ENCODE measurements at regions of chr17 and their contacts with region 1.

Region 1: GRCh38 chr17:78781948-78782916 is at the start of gene CYTH1:
- DNase-seq: peak; percentile 95 to 99 (median 96)
- H3K4me3 ChIP-seq: peak within 1 kb of the TSS; percentile 63 to 91
- H3K4me3 Mint-ChIP-seq: peak within 1 kb of the TSS; percentile 89 to 96 (median 94)
- H3K27ac ChIP-seq: peak within 1 kb of the TSS; percentile 95
- H3K27ac Mint-ChIP-seq: peak within 1 kb of the TSS; percentile 93 to 99 (median 96)
- H3K4me1 ChIP-seq: peaks cover 75% of the 10 kb centered on the region
- H3K4me1 Mint-ChIP-seq: peaks cover 27 to 71% (median 47%) of the 10 kb centered on the region in 4 donors
- H3K27me3 ChIP-seq: no peaks in the 10 kb centered on the region
- H3K27me3 Mint-ChIP-seq: no peaks in the 10 kb centered on the region
- total RNA-seq, gene CYTH1: 380 to 390 TPM

Region 2: DNA sequence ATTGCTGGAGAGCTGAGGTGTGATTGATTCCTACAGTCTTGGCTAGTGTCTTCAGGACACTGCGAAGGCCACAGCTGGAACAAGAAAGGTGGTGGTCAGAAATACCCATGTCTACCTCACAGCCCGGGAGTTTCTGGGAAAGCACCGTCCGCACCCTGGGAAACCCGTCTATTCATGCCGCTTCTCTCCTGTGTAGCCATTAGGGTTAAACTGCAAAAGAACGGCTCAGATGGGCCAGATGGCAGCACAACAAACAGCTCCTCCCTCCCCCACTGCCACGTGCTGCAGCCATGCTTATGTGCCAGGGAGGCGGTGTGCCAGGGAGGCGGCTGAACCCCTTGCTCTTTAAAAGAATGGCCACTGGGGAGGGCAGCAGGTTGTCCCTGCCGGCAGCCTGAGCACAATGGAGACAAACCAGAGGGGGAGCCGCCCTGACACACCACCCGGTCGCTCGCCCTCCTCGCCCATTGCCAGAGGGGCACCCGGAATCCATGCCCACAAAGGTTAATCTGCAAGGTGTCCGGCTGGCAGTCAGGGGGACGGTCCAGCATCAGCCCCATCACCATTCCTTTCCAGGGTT is 65.3 kb before region 1 on chr17:
- CTCF ChIA-PET with region 1: no interaction called
- POLR2A ChIA-PET with region 1: interaction called, 14 read pairs
- intact Hi-C with region 1: no loop called
- DNase-seq: peak in 2 of 5 donors; percentile 29 to 55
- H3K4me3 ChIP-seq: no peak overlapping the region
- H3K4me3 Mint-ChIP-seq: peak overlapping the region; percentile 56 to 87 (median 76)
- H3K27ac ChIP-seq: no peak overlapping the region
- H3K27ac Mint-ChIP-seq: peak overlapping the region; percentile 38 to 92 (median 89)
- H3K4me1 ChIP-seq: peaks cover 98% of the 10 kb centered on the region
- H3K4me1 Mint-ChIP-seq: peaks cover 73 to 95% (median 85%) of the 10 kb centered on the region in 4 donors
- H3K27me3 ChIP-seq: no peaks in the 10 kb centered on the region
- H3K27me3 Mint-ChIP-seq: no peaks in the 10 kb centered on the region

Region 3: DNA sequence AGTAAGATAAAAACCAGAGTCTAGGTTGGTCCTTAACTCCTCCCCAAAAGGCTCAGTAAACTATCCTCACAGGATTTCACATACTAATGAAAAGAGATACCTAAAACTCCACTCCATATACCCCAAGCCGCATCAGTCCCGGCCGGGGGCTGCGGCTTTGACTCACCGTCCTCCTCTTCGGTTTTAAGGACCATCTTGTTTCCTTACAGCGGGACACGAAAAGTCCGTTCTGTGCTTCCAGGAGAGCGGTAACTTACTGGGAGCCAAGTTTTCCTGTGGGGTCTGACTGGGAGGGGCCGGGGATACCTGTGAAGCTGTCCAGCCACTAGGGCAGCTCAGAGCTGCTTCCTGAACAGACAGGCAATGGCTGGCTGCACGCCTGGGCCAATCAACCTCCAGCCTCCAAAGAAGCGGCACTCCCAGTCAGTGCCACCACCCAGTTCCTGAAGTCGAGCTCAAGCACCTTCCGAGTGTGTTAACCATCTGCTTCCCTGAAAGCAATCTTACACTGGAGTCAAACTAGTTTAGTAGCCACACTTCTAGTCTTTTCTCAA is 45.6 kb before region 1 on chr17:
- CTCF ChIA-PET with region 1: interaction called, 11 read pairs
- POLR2A ChIA-PET with region 1: interaction called, 101 read pairs
- intact Hi-C with region 1: loop called (anchors 5 kb)
- DNase-seq: peak; percentile 69 to 84 (median 77)
- H3K4me3 ChIP-seq: peak overlapping the region; percentile 64 to 71
- H3K4me3 Mint-ChIP-seq: peak overlapping the region; percentile 91 to 98 (median 98)
- H3K27ac ChIP-seq: peak overlapping the region; percentile 82
- H3K27ac Mint-ChIP-seq: peak overlapping the region; percentile 85 to 98 (median 95)
- H3K4me1 ChIP-seq: peaks cover 89% of the 10 kb centered on the region
- H3K4me1 Mint-ChIP-seq: peaks cover 69 to 94% (median 83%) of the 10 kb centered on the region in 4 donors
- H3K27me3 ChIP-seq: no peaks in the 10 kb centered on the region
- H3K27me3 Mint-ChIP-seq: no peaks in the 10 kb centered on the region

Region 4: GRCh38 chr17:78759203-78759968 is 22.8 kb before region 1 on chr17:
- CTCF ChIA-PET with region 1: interaction called, 3 read pairs
- POLR2A ChIA-PET with region 1: interaction called, 961 read pairs
- intact Hi-C with region 1: loop called (anchors 1 kb)
- DNase-seq: peak; percentile 87 to 95 (median 92)
- H3K4me3 ChIP-seq: peak overlapping the region; percentile 26 to 51
- H3K4me3 Mint-ChIP-seq: peak overlapping the region; percentile 67 to 92 (median 83)
- H3K27ac ChIP-seq: peak overlapping the region; percentile 88
- H3K27ac Mint-ChIP-seq: peak overlapping the region; percentile 91 to 99 (median 98)
- H3K4me1 ChIP-seq: peaks cover 94% of the 10 kb centered on the region
- H3K4me1 Mint-ChIP-seq: peaks cover 56 to 88% (median 61%) of the 10 kb centered on the region in 4 donors
- H3K27me3 ChIP-seq: no peaks in the 10 kb centered on the region
- H3K27me3 Mint-ChIP-seq: no peaks in the 10 kb centered on the region

Region 5: GRCh38 chr17:78798695-78799559 is 16.7 kb after region 1 on chr17:
- CTCF ChIA-PET with region 1: interaction called, 37 read pairs
- POLR2A ChIA-PET with region 1: interaction called, 53 read pairs
- intact Hi-C with region 1: loop called (anchors 1 kb)
- DNase-seq: peak in 4 of 5 donors; percentile 50 to 65 (median 57)
- H3K4me3 ChIP-seq: no peak overlapping the region
- H3K4me3 Mint-ChIP-seq: peak overlapping the region; percentile 28 to 79 (median 66)
- H3K27ac ChIP-seq: no peak overlapping the region
- H3K27ac Mint-ChIP-seq: peak overlapping the region; percentile 87 to 99 (median 94)
- H3K4me1 ChIP-seq: peaks cover 37% of the 10 kb centered on the region
- H3K4me1 Mint-ChIP-seq: peaks cover 46 to 79% (median 62%) of the 10 kb centered on the region in 4 donors
- H3K27me3 ChIP-seq: no peaks in the 10 kb centered on the region
- H3K27me3 Mint-ChIP-seq: no peaks in the 10 kb centered on the region

Region 6: DNA sequence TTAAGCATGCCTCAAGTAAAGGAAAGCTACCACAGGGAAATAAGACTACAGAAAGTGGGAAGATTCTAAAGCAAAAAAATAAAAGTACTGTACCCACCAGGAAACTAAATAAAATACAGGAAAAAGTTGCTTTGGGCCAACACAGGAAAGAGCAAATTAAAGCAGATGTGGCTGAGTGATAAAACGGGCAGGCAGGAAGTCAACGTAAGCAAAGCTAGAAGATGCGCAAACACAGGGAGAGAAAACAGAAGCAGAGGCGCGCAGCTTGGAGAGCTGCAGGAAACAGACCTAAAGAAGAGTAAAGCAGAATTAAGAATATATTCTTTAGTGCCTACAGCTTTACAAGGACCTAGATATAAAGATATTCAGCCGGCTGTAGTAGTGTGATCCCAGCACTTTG is 36.7 kb after region 1 on chr17:
- CTCF ChIA-PET with region 1: interaction called, 5 read pairs
- POLR2A ChIA-PET with region 1: interaction called, 99 read pairs
- intact Hi-C with region 1: loop called (anchors 2 kb)
- DNase-seq: peak; percentile 82 to 87 (median 84)
- H3K4me3 ChIP-seq: peak overlapping the region in 1 of 2 donors; percentile 35
- H3K4me3 Mint-ChIP-seq: peak overlapping the region; percentile 56 to 83 (median 76)
- H3K27ac ChIP-seq: peak overlapping the region; percentile 83
- H3K27ac Mint-ChIP-seq: peak overlapping the region; percentile 86 to 100 (median 96)
- H3K4me1 ChIP-seq: peaks cover 59% of the 10 kb centered on the region
- H3K4me1 Mint-ChIP-seq: peaks cover 33 to 81% (median 50%) of the 10 kb centered on the region in 4 donors
- H3K27me3 ChIP-seq: no peaks in the 10 kb centered on the region
- H3K27me3 Mint-ChIP-seq: no peaks in the 10 kb centered on the region

Region 7: GRCh38 chr17:78962345-78962983 is 180.2 kb after region 1 on chr17:
- CTCF ChIA-PET with region 1: no interaction called
- POLR2A ChIA-PET with region 1: no interaction called
- intact Hi-C with region 1: no loop called
- DNase-seq: no peak
- H3K4me3 ChIP-seq: no peak overlapping the region
- H3K4me3 Mint-ChIP-seq: no peak overlapping the region
- H3K27ac ChIP-seq: no peak overlapping the region
- H3K27ac Mint-ChIP-seq: no peak overlapping the region
- H3K4me1 ChIP-seq: no peaks in the 10 kb centered on the region
- H3K4me1 Mint-ChIP-seq: no peaks in the 10 kb centered on the region
- H3K27me3 ChIP-seq: no peaks in the 10 kb centered on the region
- H3K27me3 Mint-ChIP-seq: peaks cover 0 to 3% of the 10 kb centered on the region in 2 donors